Spleen (tissue), 13 donors: ENCODE measurements at regions of chrX and their contacts with region 1.

Region 1: DNA sequence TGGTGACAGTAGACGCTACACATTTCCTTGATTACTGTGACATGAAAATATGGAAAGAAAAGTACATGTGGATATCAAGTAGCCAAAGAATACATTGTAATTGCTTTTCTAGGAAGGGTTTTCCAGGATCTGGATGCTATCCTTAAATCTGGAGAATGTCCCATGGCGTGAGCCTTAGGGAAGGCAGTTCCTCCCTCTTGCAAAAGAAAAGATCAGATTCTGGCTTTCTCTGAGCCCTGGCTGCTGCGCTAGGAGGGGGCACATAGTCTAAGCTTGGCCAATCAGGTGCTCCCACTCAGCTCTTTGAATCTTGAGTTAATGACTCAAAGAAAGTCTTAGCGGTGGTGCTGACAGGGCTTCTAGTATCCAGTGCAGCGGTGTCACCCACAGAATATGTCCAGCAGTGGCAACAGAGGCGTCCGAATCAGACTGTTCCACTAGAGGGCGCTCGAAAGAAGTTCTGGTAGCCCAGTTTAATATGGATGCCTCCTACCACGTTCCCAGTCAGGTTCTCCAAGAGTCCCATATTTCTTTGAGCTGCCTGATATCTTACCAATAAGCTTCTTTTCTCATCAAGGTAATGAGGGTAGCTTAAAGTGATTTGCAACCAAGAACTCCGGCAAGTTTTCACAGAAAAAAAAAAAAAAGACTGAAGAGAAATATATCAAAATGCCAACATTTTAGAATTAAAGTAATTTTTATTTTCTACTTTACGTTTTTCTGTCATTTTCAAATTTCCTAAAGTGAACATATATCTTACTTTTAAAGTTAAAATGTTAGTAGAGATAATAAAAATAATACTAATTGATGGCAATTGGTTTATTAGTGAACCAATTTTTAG is 213.4 kb upstream of the S100G start:
- DNase-seq: no peak
- H3K4me3 ChIP-seq: no peak overlapping the region
- H3K27ac ChIP-seq: no peak overlapping the region
- H3K4me1 ChIP-seq: no peaks in the 10 kb centered on the region
- H3K27me3 ChIP-seq: peaks cover 0 to 17% (median 0%) of the 10 kb centered on the region in 7 donors
- CTCF ChIP-seq: peak in 9 of 11 experiments; percentile 17 to 69 (median 54)
- POLR2A ChIP-seq: no peak

Region 2: DNA sequence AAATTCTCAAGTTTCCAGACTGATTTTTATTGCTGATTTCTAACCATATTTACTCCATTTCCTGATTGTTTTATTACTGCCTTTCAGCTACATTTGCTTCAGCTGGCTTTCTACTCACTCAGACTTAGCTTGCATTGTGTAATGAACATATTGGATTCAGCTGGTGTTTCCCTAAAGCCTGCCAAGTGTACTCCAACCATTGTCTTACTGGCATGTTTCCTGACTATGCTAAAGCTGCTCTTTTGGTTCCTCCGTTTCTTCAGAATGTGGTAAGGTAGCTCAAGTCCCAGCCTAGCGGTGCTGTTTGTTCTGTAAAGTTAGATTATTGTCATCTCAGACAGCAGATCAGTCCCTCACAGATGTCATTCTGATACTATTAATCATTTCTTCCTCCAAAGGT is 1960.4 kb before region 1 on chrX:
- intact Hi-C with region 1: no loop called
- DNase-seq: no peak
- H3K4me3 ChIP-seq: no peak overlapping the region
- H3K27ac ChIP-seq: no peak overlapping the region
- H3K4me1 ChIP-seq: no peaks in the 10 kb centered on the region
- H3K27me3 ChIP-seq: no peaks in the 10 kb centered on the region
- CTCF ChIP-seq: no peak
- POLR2A ChIP-seq: no peak

Region 3: GRCh38 chrX:16123222-16123786 is 313.3 kb before region 1 on chrX and contains the start of gene GRPR:
- intact Hi-C with region 1: loop called (anchors 10 kb)
- DNase-seq: peak; percentile 88
- H3K4me3 ChIP-seq: no peak within 1 kb of the TSS
- H3K27ac ChIP-seq: no peak within 1 kb of the TSS
- H3K4me1 ChIP-seq: peaks cover 0 to 6% (median 0%) of the 10 kb centered on the region in 6 donors
- H3K27me3 ChIP-seq: peaks cover 0 to 9% (median 0%) of the 10 kb centered on the region in 7 donors
- CTCF ChIP-seq: peak; percentile 10 to 82 (median 73)
- POLR2A ChIP-seq: no peak
- total RNA-seq, gene GRPR: 0.13 to 0.47 (median 0.33) TPM in 3 of 7 donors, not detected in the others

Region 4: DNA sequence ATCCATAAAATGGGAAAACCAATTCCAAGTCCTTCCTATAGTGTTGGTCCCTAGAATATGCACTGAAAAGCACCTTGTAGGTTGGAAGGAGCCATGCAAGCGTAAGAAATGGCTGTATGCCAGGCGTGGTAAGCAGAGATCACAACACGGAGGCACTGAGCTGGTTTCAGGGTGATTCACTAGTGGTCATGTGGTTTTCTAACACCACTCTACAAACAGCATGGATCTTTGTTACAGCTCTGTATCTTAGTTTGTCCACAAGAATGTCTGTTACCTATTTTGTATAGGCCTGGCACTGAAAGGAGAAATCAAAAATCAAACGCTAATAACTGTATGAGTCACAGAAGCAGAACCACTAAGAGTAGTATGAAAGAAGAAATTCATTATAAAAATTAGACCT is 197.4 kb before region 1 on chrX:
- intact Hi-C with region 1: no loop called
- DNase-seq: no peak
- H3K4me3 ChIP-seq: no peak overlapping the region
- H3K27ac ChIP-seq: no peak overlapping the region
- H3K4me1 ChIP-seq: no peaks in the 10 kb centered on the region
- H3K27me3 ChIP-seq: no peaks in the 10 kb centered on the region
- CTCF ChIP-seq: no peak
- POLR2A ChIP-seq: no peak

Region 5: GRCh38 chrX:16368696-16369095 is 67.9 kb before region 1 on chrX:
- intact Hi-C with region 1: no loop called
- DNase-seq: no peak
- H3K4me3 ChIP-seq: no peak overlapping the region
- H3K27ac ChIP-seq: no peak overlapping the region
- H3K4me1 ChIP-seq: no peaks in the 10 kb centered on the region
- H3K27me3 ChIP-seq: peaks cover 0 to 12% (median 0%) of the 10 kb centered on the region in 7 donors
- CTCF ChIP-seq: no peak
- POLR2A ChIP-seq: no peak